IMR-90 (cell line): ENCODE measurements at regions of chr11 and their contacts with region 1.

Region 1: GRCh38 chr11:73530109-73530508 is 67.8 kb downstream of the FAM168A start:
- DNase-seq: no peak
- ATAC-seq: no peak
- H3K4me3 ChIP-seq: no peak overlapping the region
- H3K27ac ChIP-seq: no peak overlapping the region
- H3K4me1 ChIP-seq: peaks cover 11% of the 10 kb centered on the region; the same call in 1 of the 2 replicates
- H3K27me3 ChIP-seq: no peaks in the 10 kb centered on the region
- CTCF ChIP-seq: no peak
- POLR2A ChIP-seq: no peak
- RAD21 ChIP-seq: no peak

Region 2: GRCh38 chr11:73597956-73598718 is 68.0 kb after region 1 on chr11 and contains the start of gene FAM168A:
- CTCF ChIA-PET with region 1: no interaction called
- POLR2A ChIA-PET with region 1: no interaction called
- dilution Hi-C with region 1: no loop called
- in situ Hi-C with region 1: no loop called
- intact Hi-C with region 1: loop called (anchors 5 kb)
- DNase-seq: peak; percentile 97
- ATAC-seq: peak; percentile 98
- H3K4me3 ChIP-seq: peak within 1 kb of the TSS; percentile 88
- H3K27ac ChIP-seq: peak within 1 kb of the TSS; percentile 96
- H3K4me1 ChIP-seq: peaks cover 6% of the 10 kb centered on the region; the same call in 1 of the 2 replicates
- H3K27me3 ChIP-seq: no peaks in the 10 kb centered on the region
- CTCF ChIP-seq: peak; percentile 16; the same call in 1 of the 2 replicates
- POLR2A ChIP-seq: no peak
- RAD21 ChIP-seq: peak; percentile 25; the same call in 1 of the 2 replicates
- total RNA-seq, gene FAM168A: 13.1 and 13.6 TPM in 2 replicates